ENCODE measurements at regions of chr12 and their contacts with region 1.

Region 1: GRCh38 chr12:75511116-75512048 is at the start of gene KRR1:
- DNase-seq: peak; percentile 91
- H3K4me3 Mint-ChIP-seq: peak within 1 kb of the TSS; percentile 96
- H3K27ac Mint-ChIP-seq: peak within 1 kb of the TSS; percentile 98
- H3K4me1 Mint-ChIP-seq: peaks cover 30% of the 10 kb centered on the region
- H3K27me3 Mint-ChIP-seq: no peaks in the 10 kb centered on the region
- total RNA-seq, gene KRR1: 114 and 119 TPM in 2 replicates

Region 2: DNA sequence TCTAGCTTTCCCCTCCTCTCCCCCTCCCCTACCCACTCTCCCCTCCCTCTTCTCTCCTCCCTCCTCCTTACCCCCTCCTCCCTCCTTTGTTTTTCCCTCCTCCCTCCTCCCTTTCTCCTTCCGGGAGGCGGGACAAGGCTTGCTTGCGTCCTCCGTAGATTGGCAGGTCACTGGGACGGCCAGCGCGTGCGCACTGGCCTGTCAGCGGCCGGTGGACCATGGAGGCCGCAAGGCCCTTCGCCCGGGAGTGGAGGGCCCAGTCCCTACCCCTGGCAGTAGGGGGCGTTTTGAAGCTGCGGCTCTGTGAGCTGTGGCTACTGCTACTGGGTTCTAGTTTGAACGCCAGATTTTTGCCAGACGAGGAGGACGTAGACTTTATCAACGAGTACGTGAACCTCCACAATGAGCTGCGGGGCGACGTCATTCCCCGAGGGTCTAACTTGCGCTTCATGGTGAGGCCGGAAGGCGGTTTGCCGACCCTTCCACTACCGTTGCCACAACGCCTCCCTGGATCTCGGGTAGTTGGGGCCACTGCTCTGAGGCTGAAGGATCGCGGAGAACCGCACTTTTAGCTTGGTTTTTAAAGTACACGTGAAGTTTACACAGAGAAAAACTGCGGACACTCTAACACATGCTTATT is 120.4 kb before region 1 on chr12 and contains the start of gene GLIPR1L2:
- intact Hi-C with region 1: loop called (anchors 1 kb)
- DNase-seq: peak; percentile 82
- H3K4me3 Mint-ChIP-seq: peak within 1 kb of the TSS; percentile 87
- H3K27ac Mint-ChIP-seq: peak within 1 kb of the TSS; percentile 86
- H3K4me1 Mint-ChIP-seq: peaks cover 27% of the 10 kb centered on the region
- H3K27me3 Mint-ChIP-seq: no peaks in the 10 kb centered on the region
- total RNA-seq, gene GLIPR1L2: not detected in 2 replicates

Region 3: DNA sequence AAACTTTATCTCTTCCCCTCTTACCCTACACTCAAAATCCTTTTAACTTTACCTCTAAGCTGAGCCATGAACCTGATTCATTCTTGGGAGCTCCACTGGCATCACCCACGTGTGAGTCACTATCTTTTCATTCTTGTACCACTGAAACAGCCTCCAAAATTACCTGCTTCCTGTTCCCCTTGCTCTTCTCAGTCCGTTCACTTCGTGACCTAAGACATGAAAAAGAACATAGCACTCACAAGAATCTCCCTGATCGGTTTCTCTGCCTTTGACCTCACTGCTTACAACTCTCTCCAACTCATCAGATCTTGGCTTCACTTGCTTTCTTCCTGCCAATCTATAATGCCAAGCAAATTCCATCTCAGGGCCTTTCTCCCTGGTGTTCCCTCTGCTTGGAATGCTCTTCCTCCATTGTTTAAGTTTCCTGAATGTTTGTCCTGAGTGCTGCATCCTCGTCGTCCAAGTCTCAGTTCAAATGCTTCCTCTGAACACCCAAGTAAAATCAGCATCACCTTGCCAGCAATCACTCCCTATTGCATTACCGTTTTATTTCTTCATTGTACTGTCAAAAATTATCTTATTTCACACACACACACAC is 21.7 kb before region 1 on chr12:
- intact Hi-C with region 1: loop called (anchors 2 kb)
- DNase-seq: no peak
- H3K4me3 Mint-ChIP-seq: peak overlapping the region; percentile 4
- H3K27ac Mint-ChIP-seq: peak overlapping the region; percentile 51
- H3K4me1 Mint-ChIP-seq: peaks cover 23% of the 10 kb centered on the region
- H3K27me3 Mint-ChIP-seq: no peaks in the 10 kb centered on the region

Region 4: GRCh38 chr12:75591628-75592027 is 80.2 kb after region 1 on chr12:
- intact Hi-C with region 1: no loop called
- DNase-seq: no peak
- H3K4me3 Mint-ChIP-seq: no peak overlapping the region
- H3K27ac Mint-ChIP-seq: no peak overlapping the region
- H3K4me1 Mint-ChIP-seq: peaks cover 2% of the 10 kb centered on the region
- H3K27me3 Mint-ChIP-seq: peaks cover 47% of the 10 kb centered on the region

Region 5: DNA sequence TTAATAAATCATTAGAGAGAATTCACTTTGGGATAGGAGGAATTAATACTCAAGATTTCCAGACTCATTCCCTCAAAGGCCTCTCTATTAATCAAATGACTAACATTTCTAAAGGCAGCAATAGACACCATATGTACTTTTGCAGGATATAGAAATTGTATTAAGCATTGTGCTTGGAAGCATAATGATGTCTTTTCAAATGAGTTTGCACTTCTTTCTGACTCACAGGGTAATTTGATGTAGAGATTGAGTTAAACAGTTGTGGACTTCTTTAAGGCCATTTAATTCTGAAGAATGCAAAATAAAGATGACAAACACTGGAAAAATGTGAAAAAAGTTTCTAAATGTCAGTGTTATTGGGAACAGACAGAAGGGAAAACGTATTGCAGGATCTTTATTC is 1430.9 kb after region 1 on chr12:
- intact Hi-C with region 1: no loop called
- DNase-seq: no peak
- H3K4me3 Mint-ChIP-seq: no peak overlapping the region
- H3K27ac Mint-ChIP-seq: no peak overlapping the region
- H3K4me1 Mint-ChIP-seq: no peaks in the 10 kb centered on the region
- H3K27me3 Mint-ChIP-seq: peaks cover 15% of the 10 kb centered on the region